T-cell (primary cell): ENCODE measurements at regions of chr1 and their contacts with region 1.

Region 1: DNA sequence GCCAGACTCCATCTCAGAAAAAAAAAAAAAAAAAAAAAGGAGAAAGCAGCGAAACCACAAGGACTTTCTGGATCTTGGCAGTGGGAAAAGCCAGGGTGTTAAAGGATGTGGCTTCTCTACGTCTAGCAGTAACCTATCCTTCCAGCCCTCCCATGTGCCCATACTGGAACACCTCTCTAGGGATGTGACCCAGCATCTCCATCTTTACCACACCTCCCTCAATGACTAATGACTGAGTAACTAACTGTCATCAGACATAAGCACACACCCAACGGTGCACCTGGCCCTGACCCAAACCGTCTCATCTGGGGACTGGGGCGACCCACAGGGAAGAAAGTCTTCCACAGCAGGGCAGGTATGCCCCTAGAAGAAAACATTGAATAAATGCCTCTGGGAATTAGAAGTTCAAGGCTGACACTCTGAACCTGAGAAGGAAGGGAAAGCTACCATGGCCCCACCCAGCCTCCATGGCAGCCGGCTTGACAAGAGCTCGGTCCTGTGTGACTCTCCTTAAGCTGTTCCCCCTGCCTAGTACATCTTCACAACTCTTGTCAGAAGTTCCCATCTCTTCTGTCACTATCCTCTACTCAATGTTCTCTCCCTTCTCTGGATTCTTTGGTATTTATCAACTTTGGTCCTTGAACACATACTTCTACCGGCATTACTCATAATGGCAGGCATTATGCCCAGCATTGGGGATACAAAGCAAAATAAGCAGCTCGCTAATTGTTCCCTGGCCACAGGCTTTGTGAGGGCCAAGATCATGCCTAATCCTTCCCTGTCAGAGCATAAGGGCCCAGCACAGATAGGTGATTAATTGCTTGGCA is 14.8 kb upstream of the PAQR6 start:
- DNase-seq: no peak
- ATAC-seq: no peak
- H3K4me3 ChIP-seq: no peak overlapping the region
- H3K4me3 Mint-ChIP-seq: no peak overlapping the region
- H3K27ac ChIP-seq: no peak overlapping the region
- H3K27ac Mint-ChIP-seq: no peak overlapping the region
- H3K4me1 ChIP-seq: no peaks in the 10 kb centered on the region
- H3K4me1 Mint-ChIP-seq: peaks cover 0 to 8% (median 7%) of the 10 kb centered on the region in 3 donors
- H3K27me3 ChIP-seq: no peaks in the 10 kb centered on the region
- H3K27me3 Mint-ChIP-seq: no peaks in the 10 kb centered on the region

Region 2: DNA sequence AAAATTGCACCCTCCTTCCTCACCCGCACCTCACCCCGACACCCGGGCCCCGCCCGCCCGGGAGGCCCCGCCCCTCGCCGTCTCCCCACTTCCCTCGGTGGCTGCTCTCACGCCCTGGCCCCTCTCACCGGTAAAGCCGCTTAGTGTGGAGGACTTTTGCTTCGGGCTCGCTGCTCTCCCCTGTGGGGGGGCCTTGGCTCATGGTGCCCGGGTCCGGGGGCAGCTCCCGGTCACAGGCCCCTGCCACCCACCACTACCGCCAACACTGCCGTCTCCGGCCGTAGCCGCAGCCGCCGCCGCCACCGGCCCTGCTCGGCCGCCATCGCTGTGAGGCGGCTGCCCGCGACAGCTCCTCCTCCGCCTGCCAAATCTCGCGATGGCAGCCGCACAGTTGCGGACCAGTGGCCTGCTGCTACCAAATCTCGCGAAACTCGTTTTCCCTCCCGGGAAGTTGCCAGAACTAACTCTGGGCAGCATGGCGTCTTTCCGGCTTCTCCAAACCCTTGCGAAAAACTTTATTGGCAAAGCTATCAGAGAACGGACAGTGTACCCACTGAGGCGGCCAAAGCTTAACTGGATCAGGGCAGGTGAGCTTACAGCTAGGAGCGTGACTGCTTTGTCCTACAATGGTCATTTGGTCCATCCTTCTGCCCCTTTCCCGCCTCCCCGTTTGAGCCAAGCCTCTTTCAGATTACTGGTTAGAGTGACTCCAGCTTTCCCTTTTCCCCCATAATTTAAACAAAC is 20.0 kb after region 1 on chr1 and contains the start of gene SMG5:
- CTCF ChIA-PET with region 1: interaction called in 1 of 2 experiments, 3 read pairs
- POLR2A ChIA-PET with region 1: interaction called in 1 of 2 experiments, 11 read pairs
- DNase-seq: peak; percentile 89 to 98 (median 95)
- ATAC-seq: peak; percentile 94 to 96 (median 94)
- H3K4me3 ChIP-seq: peak within 1 kb of the TSS; percentile 57 to 94
- H3K4me3 Mint-ChIP-seq: peak within 1 kb of the TSS; percentile 89 to 97 (median 97)
- H3K27ac ChIP-seq: peak within 1 kb of the TSS; percentile 74
- H3K27ac Mint-ChIP-seq: peak within 1 kb of the TSS; percentile 95
- H3K4me1 ChIP-seq: peaks cover 12 to 27% of the 10 kb centered on the region in 2 experiments
- H3K4me1 Mint-ChIP-seq: peaks cover 39 to 44% (median 42%) of the 10 kb centered on the region in 3 donors
- H3K27me3 ChIP-seq: no peaks in the 10 kb centered on the region
- H3K27me3 Mint-ChIP-seq: no peaks in the 10 kb centered on the region
- total RNA-seq, gene SMG5: 60.5 to 84.2 (median 81.3) TPM